ENCODE measurements at regions of chr19 and their contacts with region 1.

Region 1: DNA sequence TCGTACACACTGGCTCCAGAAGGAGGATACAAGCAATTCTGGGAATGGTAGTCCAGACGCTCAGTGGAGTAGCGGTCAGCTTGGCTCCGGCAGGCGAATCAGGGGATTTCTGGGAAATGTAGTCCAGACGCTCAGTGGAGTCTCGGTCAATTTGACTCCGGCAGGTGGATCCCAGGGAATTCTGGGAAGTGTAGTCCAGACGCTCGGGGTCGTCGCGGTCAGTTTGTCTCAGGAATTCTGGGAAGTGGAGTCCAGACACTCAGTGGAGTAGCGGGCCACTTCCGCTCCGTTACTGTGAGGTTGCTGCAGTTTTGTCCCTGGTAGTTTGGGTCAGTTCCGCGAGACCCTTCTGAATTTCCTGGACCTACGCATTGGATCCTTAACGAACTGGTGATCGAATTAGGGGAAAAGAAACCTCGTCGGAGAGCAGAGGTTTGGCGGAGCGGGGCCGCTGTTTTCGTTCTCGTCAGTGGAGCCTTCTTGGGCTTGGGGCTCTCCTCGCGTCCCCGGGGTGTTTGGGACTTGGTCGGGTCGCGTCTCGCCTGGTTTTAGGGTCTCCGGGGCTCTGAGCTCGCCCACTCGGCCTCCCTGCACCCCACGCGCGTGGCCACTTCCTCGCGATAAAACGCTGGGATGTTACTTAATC is at the start of gene ZNF225:
- DNase-seq: peak; percentile 92 to 98 (median 97)
- ATAC-seq: peak; percentile 98 to 99 (median 98)
- H3K4me3 ChIP-seq: peak within 1 kb of the TSS; percentile 43 to 86 (median 72)
- H3K27ac ChIP-seq: peak within 1 kb of the TSS in 11 of 12 donors; percentile 57 to 84 (median 74)
- H3K4me1 ChIP-seq: peaks cover 0 to 24% (median 18%) of the 10 kb centered on the region in 12 donors
- H3K27me3 ChIP-seq: no peaks in the 10 kb centered on the region
- CTCF ChIP-seq: peak in 4 of 12 donors; percentile 7 to 19 (median 9)
- POLR2A ChIP-seq: peak in 1 of 2 donors; percentile 49
- total RNA-seq, gene ZNF225: 1.3 to 6.2 (median 3.7) TPM

Region 2: GRCh38 chr19:43983912-43984686 is 129.2 kb before region 1 on chr19 and contains the start of gene ZNF155:
- intact Hi-C with region 1: loop called in 1 of 10 experiments (anchors 10 kb)
- DNase-seq: peak; percentile 92 to 97 (median 96)
- ATAC-seq: peak; percentile 99 to 100 (median 100)
- H3K4me3 ChIP-seq: peak within 1 kb of the TSS; percentile 51 to 89 (median 72)
- H3K27ac ChIP-seq: peak within 1 kb of the TSS in 11 of 12 donors; percentile 63 to 91 (median 76)
- H3K4me1 ChIP-seq: peaks cover 0 to 15% (median 7%) of the 10 kb centered on the region in 12 donors
- H3K27me3 ChIP-seq: no peaks in the 10 kb centered on the region
- CTCF ChIP-seq: no peak
- POLR2A ChIP-seq: no peak
- total RNA-seq, gene ZNF155: 4.0 to 7.7 (median 6.6) TPM

Region 3: DNA sequence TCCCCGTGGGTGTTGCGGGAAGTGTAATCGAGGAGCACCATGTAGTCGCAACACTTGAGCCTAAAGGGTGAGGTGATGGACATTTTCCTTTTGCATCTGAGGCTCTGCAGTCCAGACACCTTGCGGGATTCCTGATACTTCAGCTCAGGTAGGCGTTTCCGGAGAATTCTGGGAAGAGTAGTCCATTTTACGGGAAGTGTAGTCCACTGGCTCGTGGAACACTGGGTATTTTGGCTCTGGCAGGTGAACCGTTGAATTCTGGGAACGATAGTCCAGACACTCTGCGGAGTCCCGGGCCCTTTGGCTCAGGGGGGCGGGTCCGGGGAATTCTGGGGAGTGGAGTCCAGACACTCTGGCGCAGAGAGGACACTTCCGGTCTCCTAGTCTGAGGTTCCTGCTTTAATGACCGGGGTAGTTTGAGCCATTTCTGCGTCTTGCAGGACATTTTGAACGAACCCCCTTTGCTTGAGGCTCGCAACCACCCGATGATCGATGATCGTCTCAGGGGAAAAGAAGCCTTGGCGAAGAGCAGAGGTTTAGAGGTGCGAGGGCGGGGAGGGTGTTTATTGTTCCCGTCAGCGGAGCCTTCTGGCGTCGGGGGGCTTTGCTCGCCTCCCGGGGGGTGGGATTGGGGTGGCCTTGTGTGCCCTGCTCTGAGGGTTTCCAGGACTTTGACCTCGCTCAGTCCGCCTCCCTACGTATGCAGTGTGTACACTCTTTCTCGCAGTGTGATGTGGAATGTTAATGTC is 61.4 kb before region 1 on chr19 and contains the start of gene ZNF223:
- intact Hi-C with region 1: loop called in 1 of 10 experiments (anchors 5 kb)
- DNase-seq: peak; percentile 94 to 97 (median 97)
- ATAC-seq: peak; percentile 100
- H3K4me3 ChIP-seq: peak within 1 kb of the TSS; percentile 64 to 85 (median 74)
- H3K27ac ChIP-seq: peak within 1 kb of the TSS; percentile 27 to 79 (median 66)
- H3K4me1 ChIP-seq: peaks cover 0 to 21% (median 13%) of the 10 kb centered on the region in 12 donors
- H3K27me3 ChIP-seq: peaks cover 0 to 27% (median 5%) of the 10 kb centered on the region in 9 donors
- CTCF ChIP-seq: no peak
- POLR2A ChIP-seq: no peak
- total RNA-seq, gene ZNF223: 1.7 to 5.1 (median 3.2) TPM

Region 4: GRCh38 chr19:44141191-44142058 is 28.2 kb after region 1 on chr19 and contains the start of gene ZNF234:
- intact Hi-C with region 1: loop called in 2 of 10 experiments (anchors 1 to 2 kb)
- DNase-seq: peak; percentile 85 to 91 (median 90)
- ATAC-seq: peak; percentile 93 to 99 (median 98)
- H3K4me3 ChIP-seq: peak within 1 kb of the TSS; percentile 62 to 98 (median 89)
- H3K27ac ChIP-seq: peak within 1 kb of the TSS; percentile 61 to 90 (median 84)
- H3K4me1 ChIP-seq: peaks cover 0 to 19% (median 12%) of the 10 kb centered on the region in 12 donors
- H3K27me3 ChIP-seq: no peaks in the 10 kb centered on the region
- CTCF ChIP-seq: peak in 2 of 12 donors; percentile 8 to 17
- POLR2A ChIP-seq: peak in 1 of 2 donors; percentile 54
- total RNA-seq, gene ZNF234: 4.6 to 12.8 (median 9.4) TPM

Region 5: GRCh38 chr19:44207126-44207803 is 94.0 kb after region 1 on chr19:
- intact Hi-C with region 1: loop called in 6 of 10 experiments (anchors 1 to 5 kb)
- DNase-seq: peak; percentile 91 to 94 (median 93)
- ATAC-seq: peak; percentile 96 to 98 (median 97)
- H3K4me3 ChIP-seq: peak overlapping the region; percentile 47 to 86 (median 76)
- H3K27ac ChIP-seq: peak overlapping the region; percentile 84 to 96 (median 92)
- H3K4me1 ChIP-seq: peaks cover 0 to 15% (median 7%) of the 10 kb centered on the region in 12 donors
- H3K27me3 ChIP-seq: peaks cover 0 to 5% (median 0%) of the 10 kb centered on the region in 9 donors
- CTCF ChIP-seq: no peak
- POLR2A ChIP-seq: peak in 1 of 2 donors; percentile 47

Region 6: GRCh38 chr19:44304659-44305193 is 191.5 kb after region 1 on chr19 and contains the start of gene ZNF235:
- intact Hi-C with region 1: loop called in 1 of 10 experiments (anchors 1 kb)
- DNase-seq: peak; percentile 89 to 96 (median 92)
- ATAC-seq: peak; percentile 99 to 100 (median 100)
- H3K4me3 ChIP-seq: peak within 1 kb of the TSS; percentile 34 to 91 (median 72)
- H3K27ac ChIP-seq: peak within 1 kb of the TSS in 11 of 12 donors; percentile 48 to 87 (median 74)
- H3K4me1 ChIP-seq: peaks cover 0 to 18% (median 9%) of the 10 kb centered on the region in 12 donors
- H3K27me3 ChIP-seq: no peaks in the 10 kb centered on the region
- CTCF ChIP-seq: no peak
- POLR2A ChIP-seq: peak in 1 of 2 donors; percentile 64
- total RNA-seq, gene ZNF235: 1.9 to 6.3 (median 4.1) TPM

Measured in heart left ventricle (tissue), 16 donors.